PC-9 (cell line): ENCODE measurements at regions of chr3 and their contacts with region 1.

Region 1: GRCh38 chr3:32643354-32643753 is 41.6 kb upstream of the CNOT10 start:
- DNase-seq: no peak
- H3K4me3 ChIP-seq: no peak overlapping the region
- H3K27ac ChIP-seq: no peak overlapping the region
- H3K4me1 ChIP-seq: no peaks in the 10 kb centered on the region
- H3K27me3 ChIP-seq: no peaks in the 10 kb centered on the region
- CTCF ChIP-seq: no peak

Region 2: GRCh38 chr3:31922962-31923361 is 720.4 kb before region 1 on chr3:
- CTCF ChIA-PET with region 1: no interaction called
- POLR2A ChIA-PET with region 1: no interaction called
- intact Hi-C with region 1: no loop called
- DNase-seq: no peak
- H3K4me3 ChIP-seq: no peak overlapping the region
- H3K27ac ChIP-seq: no peak overlapping the region
- H3K4me1 ChIP-seq: no peaks in the 10 kb centered on the region; the same call in 1 of the 2 replicates
- H3K27me3 ChIP-seq: no peaks in the 10 kb centered on the region
- CTCF ChIP-seq: no peak

Region 3: GRCh38 chr3:32551087-32551486 is 92.3 kb before region 1 on chr3:
- CTCF ChIA-PET with region 1: interaction called, 20 read pairs
- POLR2A ChIA-PET with region 1: no interaction called
- intact Hi-C with region 1: no loop called
- DNase-seq: no peak
- H3K4me3 ChIP-seq: no peak overlapping the region
- H3K27ac ChIP-seq: no peak overlapping the region
- H3K4me1 ChIP-seq: no peaks in the 10 kb centered on the region
- H3K27me3 ChIP-seq: no peaks in the 10 kb centered on the region
- CTCF ChIP-seq: no peak